AG04450 (cell line): ENCODE measurements at regions of chr7 and their contacts with region 1.

Region 1: DNA sequence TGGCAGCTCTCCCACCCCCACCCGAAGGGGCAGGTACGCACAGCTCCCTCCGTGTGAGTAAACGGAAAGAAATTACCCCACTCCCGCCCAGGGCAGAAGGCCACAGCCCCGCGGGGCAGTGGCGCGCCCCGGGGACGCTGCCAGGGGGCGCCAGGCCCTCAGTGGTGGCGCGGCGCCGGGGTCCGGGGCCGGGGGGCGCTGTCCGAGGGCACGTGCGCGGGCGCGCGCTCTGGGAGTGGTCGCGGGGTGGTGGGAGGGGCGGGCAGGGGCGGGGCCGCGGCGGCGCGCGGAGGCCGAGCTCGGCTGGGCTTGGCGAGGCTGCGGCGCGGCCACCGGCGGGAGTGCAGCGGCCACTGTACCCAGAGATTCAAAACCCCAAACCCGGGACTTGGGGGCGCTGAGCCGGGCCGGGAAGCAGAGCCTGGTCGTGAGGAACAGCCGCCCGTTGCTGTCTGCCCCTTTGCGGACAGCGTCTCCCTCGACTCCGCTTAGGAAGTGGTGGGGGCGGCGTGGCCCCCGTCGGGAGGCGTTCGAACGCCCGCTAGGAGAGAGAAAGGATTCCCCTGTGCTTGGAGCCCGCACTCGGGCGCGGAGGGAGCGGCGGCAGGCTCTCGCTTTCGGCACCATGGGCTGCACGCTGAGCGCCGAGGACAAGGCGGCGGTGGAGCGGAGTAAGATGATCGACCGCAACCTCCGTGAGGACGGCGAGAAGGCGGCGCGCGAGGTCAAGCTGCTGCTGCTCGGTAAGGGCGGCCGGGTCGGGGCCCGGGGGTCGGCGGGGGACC is at the start of gene GNAI1:
- DNase-seq: no peak
- H3K4me3 ChIP-seq: peak within 1 kb of the TSS; percentile 71
- H3K27ac ChIP-seq: peak within 1 kb of the TSS; percentile 57
- H3K27me3 ChIP-seq: no peaks in the 10 kb centered on the region
- CTCF ChIP-seq: peak; percentile 28; the same call in 1 of the 2 replicates
- polyA plus RNA-seq, gene GNAI1: 31.9 and 56.2 TPM in 2 replicates

Region 2: DNA sequence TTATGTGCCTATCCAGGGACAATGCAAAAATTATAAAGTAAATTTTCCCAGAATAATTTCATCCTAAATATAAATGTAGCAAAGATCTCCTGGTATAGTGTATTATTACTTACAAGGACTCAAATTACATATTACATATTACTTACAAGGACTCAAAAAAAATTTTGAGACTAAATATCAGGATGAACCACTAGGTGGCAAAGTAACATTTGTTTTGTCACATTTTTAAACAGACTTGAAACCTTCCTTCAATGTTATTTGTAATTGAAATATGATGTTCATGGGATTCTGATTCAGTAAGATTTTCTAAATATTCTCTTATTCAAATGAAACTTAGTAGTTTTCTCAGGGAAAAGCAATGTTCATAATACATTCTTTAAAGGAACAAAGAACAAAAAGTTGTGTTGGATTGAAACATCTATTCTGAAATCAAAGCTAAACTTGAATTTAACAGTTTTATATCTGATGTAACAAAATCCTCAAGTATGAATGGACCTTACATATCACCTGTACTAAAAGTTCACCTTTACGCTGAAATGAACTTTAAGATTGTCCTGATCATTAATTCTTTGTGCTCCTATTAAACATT is 74.4 kb before region 1 on chr7:
- CTCF ChIA-PET with region 1: interaction called, 12 read pairs
- POLR2A ChIA-PET with region 1: no interaction called
- DNase-seq: peak; percentile 24
- H3K4me3 ChIP-seq: no peak overlapping the region
- H3K27ac ChIP-seq: no peak overlapping the region
- H3K27me3 ChIP-seq: no peaks in the 10 kb centered on the region
- CTCF ChIP-seq: peak; percentile 49

Region 3: DNA sequence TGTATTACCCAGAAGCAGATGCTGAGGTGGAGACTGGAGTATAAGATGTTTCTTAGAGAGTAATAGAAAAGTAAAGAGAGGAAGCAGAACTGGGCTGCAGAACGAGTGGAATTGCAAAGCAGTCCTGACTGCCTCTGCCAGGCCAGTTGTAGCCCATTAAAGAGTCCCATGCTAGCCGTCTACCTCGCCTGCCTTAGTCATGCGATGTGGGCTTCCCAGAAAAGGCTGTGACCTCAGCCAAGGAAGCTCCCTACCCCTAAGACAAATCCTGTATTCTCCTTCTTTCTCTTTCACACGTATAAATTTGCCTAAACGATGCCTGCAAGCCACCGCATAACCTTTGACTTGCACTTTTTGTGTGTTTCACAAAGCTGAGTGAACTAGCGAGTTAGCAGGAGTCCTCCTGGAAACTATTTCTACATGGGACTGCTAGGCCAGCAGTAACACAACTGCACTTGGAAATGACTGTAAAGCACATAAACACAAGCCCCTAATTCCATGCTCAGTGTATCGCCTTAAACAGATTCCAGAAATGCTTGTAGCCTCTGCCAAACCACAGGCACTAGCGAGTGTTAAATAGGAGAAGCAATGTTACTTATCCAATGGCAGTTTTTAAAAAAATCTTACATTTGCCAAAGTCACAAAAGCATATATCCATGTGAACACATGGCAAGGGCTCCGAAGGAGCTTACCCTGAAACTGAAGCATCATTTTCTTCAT is 47.5 kb before region 1 on chr7:
- CTCF ChIA-PET with region 1: interaction called, 10 read pairs
- POLR2A ChIA-PET with region 1: interaction called, 5 read pairs
- DNase-seq: peak; percentile 59
- H3K4me3 ChIP-seq: no peak overlapping the region
- H3K27ac ChIP-seq: peak overlapping the region; percentile 77
- H3K27me3 ChIP-seq: no peaks in the 10 kb centered on the region
- CTCF ChIP-seq: no peak

Region 4: DNA sequence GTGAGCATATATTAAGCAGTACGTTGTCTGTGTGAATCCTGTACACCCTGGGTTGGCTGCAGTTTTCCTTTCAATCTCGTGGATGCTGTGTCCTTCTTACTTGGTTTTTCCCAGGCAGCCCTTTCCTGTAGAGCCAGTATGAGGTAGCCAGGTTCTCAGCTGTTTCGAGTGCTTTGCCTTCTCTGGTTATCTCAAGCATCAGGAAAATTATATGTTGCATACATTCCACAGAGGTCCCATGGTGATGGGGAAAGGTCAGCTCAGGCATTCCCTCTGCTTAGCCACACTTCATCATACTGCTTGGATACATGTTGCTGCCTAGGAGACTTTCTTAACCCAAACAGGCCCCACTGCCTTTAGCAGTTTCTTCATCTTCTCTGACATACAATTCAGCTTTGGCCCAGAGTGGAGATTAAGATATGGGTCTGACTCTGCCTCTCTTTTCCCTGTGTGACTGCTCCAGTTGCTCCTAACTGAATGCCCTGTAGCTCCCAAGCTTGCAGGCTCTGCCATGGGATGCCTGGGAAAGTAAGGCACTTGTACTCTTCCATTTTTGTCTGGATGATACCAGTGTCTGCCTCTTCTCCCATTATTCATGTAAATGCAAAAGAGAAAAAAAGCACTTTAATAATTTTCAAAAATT is 11.2 kb after region 1 on chr7:
- CTCF ChIA-PET with region 1: interaction called, 17 read pairs
- POLR2A ChIA-PET with region 1: interaction called, 6 read pairs
- DNase-seq: peak; percentile 78
- H3K4me3 ChIP-seq: no peak overlapping the region; the same call in 1 of the 2 replicates
- H3K27ac ChIP-seq: peak overlapping the region; percentile 59
- H3K27me3 ChIP-seq: no peaks in the 10 kb centered on the region
- CTCF ChIP-seq: no peak